AG04449 (cell line): ENCODE measurements at regions of chr9 and their contacts with region 1.

Region 1: DNA sequence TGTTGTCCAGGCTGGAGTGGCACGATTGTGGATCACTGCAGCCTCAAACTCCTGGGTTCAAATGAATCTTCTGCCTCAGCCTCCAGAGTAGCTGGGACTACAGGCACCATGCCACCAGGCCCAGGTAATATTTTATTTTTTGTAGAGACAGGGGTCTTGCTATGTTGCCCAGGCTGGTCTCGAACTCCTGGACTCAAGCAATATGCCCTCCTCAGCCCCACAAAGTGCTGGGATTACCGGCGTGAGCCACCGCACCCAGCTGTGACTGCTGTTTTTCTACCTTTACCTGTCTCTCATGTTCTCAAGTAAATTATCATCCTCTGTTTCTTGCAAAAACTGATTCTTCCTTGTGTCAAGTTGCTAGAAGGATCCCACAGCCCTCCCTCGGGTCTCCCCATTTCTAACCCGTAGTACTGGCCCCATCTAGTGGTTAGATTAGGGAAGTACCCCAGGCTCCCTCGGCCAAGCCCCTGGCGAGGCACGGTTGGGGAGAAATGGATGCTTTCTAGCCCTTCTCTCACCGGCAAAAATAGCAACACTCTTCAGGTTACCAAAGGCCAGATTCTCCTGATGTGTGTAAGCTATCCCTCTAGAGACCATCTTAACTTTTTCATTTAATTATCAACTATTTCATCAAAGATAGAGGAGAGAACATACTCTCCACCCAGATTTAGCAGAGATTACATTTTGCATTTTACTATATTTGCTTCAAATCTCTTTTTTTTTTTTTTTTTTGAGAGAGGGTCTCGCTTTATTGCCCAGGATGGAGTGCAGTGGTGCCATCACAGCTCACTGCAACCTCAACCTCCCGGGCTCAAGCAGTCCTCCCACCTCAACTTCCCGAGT is 19.2 kb upstream of the TOR1B start:
- DNase-seq: no peak
- H3K4me3 ChIP-seq: no peak overlapping the region
- CTCF ChIP-seq: peak; percentile 84

Region 2: GRCh38 chr9:129131300-129132145 is 652.2 kb before region 1 on chr9:
- CTCF ChIA-PET with region 1: interaction called, 11 read pairs
- POLR2A ChIA-PET with region 1: no interaction called
- DNase-seq: no peak
- H3K4me3 ChIP-seq: no peak overlapping the region
- CTCF ChIP-seq: peak; percentile 99

Region 3: DNA sequence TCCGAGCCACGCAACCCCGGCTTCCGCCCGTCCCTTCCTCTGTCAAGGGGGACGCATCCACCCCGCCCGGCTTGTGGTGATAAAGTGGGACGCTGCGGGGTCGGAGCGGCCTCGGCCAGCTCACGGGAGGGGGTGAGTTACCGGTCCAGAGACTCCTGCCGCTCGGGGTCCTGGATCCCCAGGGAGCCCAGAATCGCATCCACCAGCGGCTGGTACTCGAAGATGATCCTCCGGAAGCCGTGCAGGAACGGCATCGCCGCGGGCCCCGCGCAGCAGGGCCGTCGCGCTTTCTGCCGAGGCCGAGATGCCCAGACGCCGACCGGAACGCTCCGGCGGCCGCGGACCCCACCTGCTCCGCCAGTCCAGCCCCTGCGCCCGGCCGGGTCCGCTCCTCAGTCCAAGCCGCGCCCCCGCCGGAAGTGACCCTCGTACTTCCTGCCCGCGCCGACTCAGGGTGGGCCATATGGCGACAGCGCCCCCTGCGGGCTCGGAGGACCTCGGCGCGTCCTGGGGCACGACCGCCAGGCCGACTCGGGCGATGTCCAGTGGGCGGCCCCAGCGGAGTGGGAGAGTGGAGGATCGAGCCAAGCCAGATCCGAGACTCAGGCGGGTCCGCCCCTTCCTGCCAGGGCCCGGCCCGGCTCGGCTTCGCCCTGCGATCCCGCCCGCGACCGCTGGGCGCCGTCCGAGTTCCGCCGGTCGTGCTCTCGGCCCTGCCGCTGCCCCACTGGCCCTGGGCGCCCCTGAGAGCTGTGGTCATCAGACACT is 141.8 kb before region 1 on chr9 and contains the start of gene ASB6:
- CTCF ChIA-PET with region 1: interaction called, 267 read pairs
- POLR2A ChIA-PET with region 1: interaction called, 3 read pairs
- DNase-seq: peak; percentile 69
- H3K4me3 ChIP-seq: peak within 1 kb of the TSS; percentile 87
- CTCF ChIP-seq: peak; percentile 89

Region 4: GRCh38 chr9:129752915-129753729 is 30.6 kb before region 1 on chr9 and contains the start of gene PTGES:
- CTCF ChIA-PET with region 1: interaction called, 54 read pairs
- POLR2A ChIA-PET with region 1: no interaction called
- DNase-seq: no peak
- H3K4me3 ChIP-seq: peak within 1 kb of the TSS; percentile 63
- CTCF ChIP-seq: no peak

Region 5: DNA sequence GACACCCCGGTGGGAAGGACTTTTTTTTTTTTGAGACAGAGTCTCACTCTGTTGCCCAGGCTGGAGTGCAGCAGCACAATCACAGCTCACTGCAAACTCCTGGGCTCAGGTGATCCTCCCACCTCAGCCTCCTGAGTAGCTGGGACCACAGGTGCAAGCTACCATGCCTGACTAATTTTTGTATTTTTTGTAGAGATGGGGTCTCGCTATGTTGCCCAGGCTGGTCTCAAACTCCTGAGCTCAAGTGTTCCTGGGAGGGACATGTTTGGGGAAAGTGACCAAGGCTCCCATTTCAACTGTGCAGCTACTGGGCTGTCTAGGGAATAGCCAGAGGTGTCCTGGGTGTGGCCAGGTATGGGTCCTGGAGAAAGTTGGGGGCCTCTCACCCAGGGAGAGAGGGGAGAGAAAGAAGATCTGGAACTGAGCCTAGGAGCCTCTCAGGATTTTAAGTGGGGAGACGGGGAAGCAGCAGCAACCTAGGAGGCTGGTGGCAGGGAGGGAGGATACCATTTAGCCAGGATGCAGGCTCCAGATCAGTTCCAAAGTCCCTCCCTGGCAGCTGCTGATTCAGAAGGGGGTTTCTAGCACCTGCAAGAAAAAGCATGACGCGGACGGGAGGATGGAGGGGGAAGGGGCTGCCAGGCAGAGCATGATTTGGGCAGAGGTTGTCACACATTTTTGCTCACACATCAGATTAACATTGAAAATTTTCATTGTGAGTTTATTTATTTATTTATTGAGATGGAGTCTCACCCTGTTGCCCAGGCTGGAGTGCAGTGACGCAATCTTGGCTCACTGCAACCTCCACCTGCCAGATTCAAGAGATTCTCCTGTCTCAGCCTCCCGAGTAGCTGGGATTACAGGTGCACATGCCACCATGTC is 12.5 kb after region 1 on chr9:
- CTCF ChIA-PET with region 1: interaction called, 13 read pairs
- POLR2A ChIA-PET with region 1: no interaction called
- DNase-seq: no peak
- H3K4me3 ChIP-seq: no peak overlapping the region
- CTCF ChIP-seq: no peak